CD8-positive, alpha-beta T cell (primary cell): ENCODE measurements at regions of chr14 and their contacts with region 1.

Region 1: GRCh38 chr14:77028384-77029231 is at the start of gene IRF2BPL:
- DNase-seq: peak; percentile 86 to 98 (median 94)
- ATAC-seq: peak; percentile 68
- H3K4me3 ChIP-seq: peak within 1 kb of the TSS; percentile 66 to 94
- H3K4me3 Mint-ChIP-seq: peak within 1 kb of the TSS; percentile 93
- H3K27ac ChIP-seq: peak within 1 kb of the TSS; percentile 90 to 94
- H3K27ac Mint-ChIP-seq: peak within 1 kb of the TSS; percentile 96
- H3K4me1 ChIP-seq: peaks cover 69% of the 10 kb centered on the region
- H3K4me1 Mint-ChIP-seq: peaks cover 60% of the 10 kb centered on the region
- H3K27me3 ChIP-seq: no peaks in the 10 kb centered on the region
- H3K27me3 Mint-ChIP-seq: no peaks in the 10 kb centered on the region
- CTCF ChIP-seq: peak; percentile 2
- total RNA-seq, gene IRF2BPL: 53.7 to 53.9 TPM

Region 2: GRCh38 chr14:76910371-76910890 is 118.2 kb before region 1 on chr14:
- CTCF ChIA-PET with region 1: interaction called, 26 read pairs
- POLR2A ChIA-PET with region 1: interaction called, 7 read pairs
- intact Hi-C with region 1: loop called (anchors 1 kb)
- DNase-seq: no peak
- ATAC-seq: no peak
- H3K4me3 ChIP-seq: no peak overlapping the region
- H3K4me3 Mint-ChIP-seq: no peak overlapping the region
- H3K27ac ChIP-seq: no peak overlapping the region
- H3K27ac Mint-ChIP-seq: no peak overlapping the region
- H3K4me1 ChIP-seq: peaks cover 25% of the 10 kb centered on the region
- H3K4me1 Mint-ChIP-seq: peaks cover 25% of the 10 kb centered on the region
- H3K27me3 ChIP-seq: no peaks in the 10 kb centered on the region
- H3K27me3 Mint-ChIP-seq: no peaks in the 10 kb centered on the region
- CTCF ChIP-seq: no peak

Region 3: DNA sequence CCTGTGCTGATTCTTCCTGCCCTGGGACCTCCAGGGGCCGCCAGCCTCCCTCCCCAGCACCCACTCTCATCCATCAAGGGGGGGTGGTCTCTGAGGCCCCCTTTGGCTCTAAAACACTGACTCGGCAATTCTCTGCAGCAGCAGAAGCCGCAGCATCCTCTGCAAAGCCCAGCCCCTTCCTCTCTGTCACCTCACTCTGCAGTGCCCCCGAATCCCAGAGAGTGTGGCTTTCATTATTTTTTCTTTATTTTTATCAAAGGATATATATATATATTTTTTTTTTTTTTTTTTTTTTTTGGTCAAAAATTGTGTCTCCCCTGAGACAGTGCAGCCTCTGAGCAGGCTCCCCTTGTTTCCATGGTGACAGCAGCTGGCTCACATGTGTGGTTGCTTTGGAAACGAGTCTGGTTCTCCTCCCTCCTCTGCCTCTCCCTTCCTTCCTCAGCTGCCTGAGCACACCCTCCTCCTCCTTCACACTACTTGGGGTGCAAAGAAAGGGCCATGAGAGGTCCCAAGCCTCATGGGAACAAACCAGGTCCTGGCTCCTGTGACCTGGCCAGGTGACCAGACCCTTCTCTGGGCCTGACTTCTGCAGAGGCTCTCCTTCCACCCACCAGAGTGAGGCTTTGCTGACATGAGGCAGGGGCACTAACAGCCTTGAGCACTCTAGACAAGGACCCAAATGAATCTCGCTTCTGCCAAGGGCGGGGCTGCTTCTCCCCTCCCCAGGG is 101.9 kb before region 1 on chr14:
- CTCF ChIA-PET with region 1: interaction called, 3 read pairs
- POLR2A ChIA-PET with region 1: interaction called, 12 read pairs
- intact Hi-C with region 1: no loop called
- DNase-seq: peak; percentile 20 to 89 (median 65)
- ATAC-seq: peak; percentile 57
- H3K4me3 ChIP-seq: peak overlapping the region in 1 of 2 experiments; percentile 54
- H3K4me3 Mint-ChIP-seq: peak overlapping the region; percentile 75
- H3K27ac ChIP-seq: peak overlapping the region; percentile 25 to 63
- H3K27ac Mint-ChIP-seq: peak overlapping the region; percentile 85
- H3K4me1 ChIP-seq: peaks cover 61% of the 10 kb centered on the region
- H3K4me1 Mint-ChIP-seq: peaks cover 76% of the 10 kb centered on the region
- H3K27me3 ChIP-seq: no peaks in the 10 kb centered on the region
- H3K27me3 Mint-ChIP-seq: no peaks in the 10 kb centered on the region
- CTCF ChIP-seq: no peak

Region 4: DNA sequence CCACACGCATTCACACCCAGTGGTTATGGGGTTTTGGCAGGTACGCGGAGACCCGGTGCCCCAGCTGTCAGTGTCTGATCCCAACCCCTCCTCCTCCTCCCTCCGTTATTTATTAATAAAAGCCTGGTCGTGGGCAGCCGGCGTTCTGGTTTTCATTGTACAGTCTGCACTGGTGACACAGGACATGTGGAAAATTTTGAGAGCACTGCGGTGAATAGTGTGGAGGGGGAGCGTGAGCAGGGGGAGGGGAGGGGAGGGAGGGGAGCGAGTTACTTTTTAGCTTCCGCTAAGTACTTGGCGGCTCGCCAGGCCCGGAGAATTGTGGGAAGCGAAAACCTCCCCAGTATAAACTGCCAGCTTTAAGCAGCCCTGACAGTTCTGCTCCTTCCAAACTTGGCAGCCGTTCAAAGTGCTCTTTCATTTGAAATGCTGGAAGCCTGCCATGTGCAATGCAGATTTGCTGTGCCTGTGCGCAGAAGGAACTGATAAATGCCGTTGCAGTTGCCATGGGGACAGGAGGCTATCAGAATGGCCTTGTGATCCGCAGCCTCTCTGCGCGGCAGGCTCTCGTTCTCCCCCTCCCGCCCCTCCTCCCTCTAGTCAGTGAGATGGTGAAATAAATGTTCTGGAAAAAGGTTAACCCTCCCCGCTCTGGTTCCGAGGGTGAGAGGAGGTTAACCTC is 11.6 kb after region 1 on chr14:
- CTCF ChIA-PET with region 1: interaction called, 20 read pairs
- POLR2A ChIA-PET with region 1: interaction called, 89 read pairs
- intact Hi-C with region 1: loop called (anchors 1 kb)
- DNase-seq: peak; percentile 94 to 100 (median 99)
- ATAC-seq: peak; percentile 77
- H3K4me3 ChIP-seq: peak overlapping the region; percentile 42 to 47
- H3K4me3 Mint-ChIP-seq: peak overlapping the region; percentile 86
- H3K27ac ChIP-seq: peak overlapping the region; percentile 90 to 94
- H3K27ac Mint-ChIP-seq: peak overlapping the region; percentile 99
- H3K4me1 ChIP-seq: peaks cover 74% of the 10 kb centered on the region
- H3K4me1 Mint-ChIP-seq: peaks cover 90% of the 10 kb centered on the region
- H3K27me3 ChIP-seq: no peaks in the 10 kb centered on the region
- H3K27me3 Mint-ChIP-seq: no peaks in the 10 kb centered on the region
- CTCF ChIP-seq: no peak

Region 5: DNA sequence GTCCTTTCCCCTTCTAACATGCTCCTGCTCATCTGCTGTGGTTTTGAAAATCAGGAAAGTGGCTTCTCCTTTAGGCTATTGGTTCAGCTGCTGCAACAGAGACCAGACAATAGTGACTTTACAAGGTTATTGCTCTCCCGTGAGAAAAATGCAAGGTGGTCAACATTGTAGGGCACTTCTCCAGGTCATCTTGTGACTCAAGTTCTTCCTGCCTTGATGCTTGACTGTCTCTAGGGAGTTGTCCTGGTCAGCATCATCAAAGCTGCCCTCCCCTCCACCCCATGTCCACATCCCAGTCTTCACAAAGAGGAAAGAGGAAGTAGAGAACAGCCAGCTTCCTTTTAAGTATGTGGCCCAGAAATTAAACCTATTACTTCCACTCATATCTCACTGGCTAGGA is 149.1 kb after region 1 on chr14:
- CTCF ChIA-PET with region 1: no interaction called
- POLR2A ChIA-PET with region 1: no interaction called
- intact Hi-C with region 1: no loop called
- DNase-seq: no peak
- ATAC-seq: no peak
- H3K4me3 ChIP-seq: no peak overlapping the region
- H3K4me3 Mint-ChIP-seq: no peak overlapping the region
- H3K27ac ChIP-seq: no peak overlapping the region
- H3K27ac Mint-ChIP-seq: no peak overlapping the region
- H3K4me1 ChIP-seq: peaks cover 6% of the 10 kb centered on the region
- H3K4me1 Mint-ChIP-seq: peaks cover 8% of the 10 kb centered on the region
- H3K27me3 ChIP-seq: no peaks in the 10 kb centered on the region
- H3K27me3 Mint-ChIP-seq: peaks cover 17% of the 10 kb centered on the region
- CTCF ChIP-seq: no peak